Right cardiac atrium (tissue), 5 donors: ENCODE measurements at regions of chr6 and their contacts with region 1.

Region 1: DNA sequence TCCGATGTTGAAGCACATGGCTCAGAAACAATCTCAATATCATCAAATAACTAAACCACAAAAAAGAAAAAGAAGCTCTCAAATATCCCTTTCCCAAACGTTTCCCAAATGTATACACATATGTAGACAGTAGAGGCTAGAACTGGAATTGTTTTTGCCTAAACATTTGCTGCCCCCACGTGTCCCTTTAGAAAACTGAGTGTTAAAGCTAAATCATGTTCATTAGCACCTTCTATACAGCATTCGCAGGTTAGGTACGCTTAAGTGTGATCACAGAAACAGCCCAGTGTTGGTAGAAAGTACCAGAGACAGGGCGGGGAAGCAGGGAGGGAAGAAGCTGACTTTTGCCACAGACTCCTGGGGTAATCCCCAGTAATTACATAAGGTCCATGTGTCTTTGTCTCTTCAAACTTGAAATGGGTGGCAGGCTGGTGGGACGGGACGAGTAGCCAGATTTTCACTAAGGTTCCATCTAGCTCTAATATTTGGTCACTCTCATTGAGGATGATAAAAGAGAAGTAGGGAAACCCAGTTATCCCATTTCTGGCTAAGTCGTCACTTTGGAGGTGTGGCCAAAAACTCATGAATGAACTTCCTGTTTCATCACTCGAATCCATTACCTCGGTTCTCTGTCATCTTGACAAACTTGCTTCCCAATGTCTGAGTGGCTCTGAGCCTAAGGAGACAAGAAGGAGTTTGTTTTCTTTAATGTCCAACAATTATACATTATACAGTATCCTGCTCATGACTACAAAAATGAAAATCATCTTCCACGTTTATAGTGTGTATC is 15.0 kb upstream of the TFAP2A start:
- DNase-seq: no peak
- ATAC-seq: peak; percentile 31 to 60
- H3K4me3 ChIP-seq: no peak overlapping the region
- H3K27ac ChIP-seq: no peak overlapping the region
- H3K4me1 ChIP-seq: peaks cover 7% of the 10 kb centered on the region
- H3K27me3 ChIP-seq: no peaks in the 10 kb centered on the region

Region 2: DNA sequence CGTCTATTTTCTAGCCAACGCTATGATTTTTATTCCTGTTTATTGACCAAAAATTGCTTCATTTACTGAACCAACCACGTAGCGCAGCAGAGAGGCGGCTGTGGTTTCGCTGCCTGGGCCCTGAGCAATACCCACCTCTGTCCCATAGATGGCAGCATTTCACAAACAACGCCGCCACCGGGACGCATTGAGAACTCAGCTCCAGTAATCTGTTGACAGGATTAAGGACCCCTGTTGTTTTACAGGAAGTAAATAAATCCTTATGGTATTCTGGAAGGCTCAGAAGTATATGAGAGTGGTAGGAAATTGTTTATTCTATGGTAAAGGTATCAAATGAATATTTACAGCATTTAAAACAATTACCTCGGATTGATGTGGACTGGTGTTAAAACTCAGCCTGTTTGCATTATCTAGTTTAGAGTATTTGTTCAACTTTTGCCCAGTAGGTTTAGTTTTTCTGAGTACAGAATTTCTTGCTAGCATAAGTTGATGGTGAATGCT is 1446.6 kb before region 1 on chr6:
- intact Hi-C with region 1: loop called in 3 of 4 experiments (anchors 5 to 10 kb)
- DNase-seq: peak; percentile 35 to 63 (median 62)
- ATAC-seq: peak; percentile 60 to 77
- H3K4me3 ChIP-seq: no peak overlapping the region
- H3K27ac ChIP-seq: no peak overlapping the region
- H3K4me1 ChIP-seq: no peaks in the 10 kb centered on the region
- H3K27me3 ChIP-seq: no peaks in the 10 kb centered on the region

Region 3: GRCh38 chr6:9540534-9541126 is 889.2 kb before region 1 on chr6:
- intact Hi-C with region 1: loop called in 1 of 4 experiments (anchors 10 kb)
- DNase-seq: no peak
- ATAC-seq: no peak
- H3K4me3 ChIP-seq: no peak overlapping the region
- H3K27ac ChIP-seq: no peak overlapping the region
- H3K4me1 ChIP-seq: no peaks in the 10 kb centered on the region
- H3K27me3 ChIP-seq: no peaks in the 10 kb centered on the region

Region 4: DNA sequence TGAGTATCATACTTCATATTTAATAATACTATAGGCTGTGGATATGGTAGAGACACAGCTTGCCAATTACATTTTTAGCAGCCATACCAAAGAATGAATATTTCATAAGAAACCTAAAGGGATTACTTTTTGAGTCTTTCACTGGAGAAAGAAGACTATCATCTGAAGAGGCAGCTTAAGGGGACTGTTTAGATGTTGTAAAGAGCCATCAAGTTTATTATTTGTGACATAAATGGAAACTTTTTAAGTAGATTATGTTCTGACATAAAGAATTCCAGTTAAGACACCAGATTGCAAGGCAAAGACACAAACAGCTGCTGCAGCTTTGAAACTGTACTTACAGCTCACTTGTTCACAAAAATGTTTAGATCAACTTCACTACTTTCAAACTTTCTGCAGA is 444.4 kb before region 1 on chr6:
- intact Hi-C with region 1: no loop called
- DNase-seq: no peak
- ATAC-seq: no peak
- H3K4me3 ChIP-seq: no peak overlapping the region
- H3K27ac ChIP-seq: no peak overlapping the region
- H3K4me1 ChIP-seq: no peaks in the 10 kb centered on the region
- H3K27me3 ChIP-seq: no peaks in the 10 kb centered on the region